GM10248 (cell line): ENCODE measurements at regions of chr14 and their contacts with region 1.

Region 1: DNA sequence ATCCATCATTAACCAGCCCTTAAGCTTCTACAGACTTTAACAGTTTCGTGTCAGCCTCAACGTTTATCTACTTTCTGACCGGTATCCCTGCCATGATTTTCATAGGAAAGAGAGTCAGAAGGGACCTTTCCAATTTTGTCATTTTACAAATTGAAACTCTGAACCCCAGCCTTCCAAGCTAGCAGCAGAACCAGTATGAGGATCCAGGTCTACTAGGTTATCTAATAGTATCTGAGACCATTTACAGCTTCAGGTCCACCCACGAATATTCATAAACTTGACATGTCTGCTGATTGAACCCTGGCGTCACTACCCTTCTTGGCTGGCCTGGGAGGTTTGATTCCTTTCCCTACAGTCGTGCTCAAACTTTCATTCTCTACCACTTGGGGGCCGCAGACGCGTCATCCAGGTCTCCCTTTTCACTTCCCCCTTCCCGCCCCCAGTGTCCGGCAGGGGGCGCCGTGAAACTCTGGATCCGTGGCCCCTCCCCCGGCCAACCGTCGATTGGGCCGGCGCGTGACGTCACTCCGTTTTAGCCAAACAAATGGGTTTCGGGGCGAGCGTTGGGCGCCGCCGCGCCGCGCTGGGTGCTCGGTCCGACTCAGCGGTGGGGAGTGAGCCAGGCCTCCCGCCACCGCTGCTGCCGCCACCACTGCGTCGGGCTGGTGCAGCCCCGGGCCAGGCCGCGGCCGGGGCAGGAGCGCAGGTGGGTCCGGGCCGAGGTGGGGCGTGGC is at the start of gene FBXO34:
- DNase-seq: peak; percentile 96
- CTCF ChIP-seq: peak; percentile 99

Region 2: DNA sequence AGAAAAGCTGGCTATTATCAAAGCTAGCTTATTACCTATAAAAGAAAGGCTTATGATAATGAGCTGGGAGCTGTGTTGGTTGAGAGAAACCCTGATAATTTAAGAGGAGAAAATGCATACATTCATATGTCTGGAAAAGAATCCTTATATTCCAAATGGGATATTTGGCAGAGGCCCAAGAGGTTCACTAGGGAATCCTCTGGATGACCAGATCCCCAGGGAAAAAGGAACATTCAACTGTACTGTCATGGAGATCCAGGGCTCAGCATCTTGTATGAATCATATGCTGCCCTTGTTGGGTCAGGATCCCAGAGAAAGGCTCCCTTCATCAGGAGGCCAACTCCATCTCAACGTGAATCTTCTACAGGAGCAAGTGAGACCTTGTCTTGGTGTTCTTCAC is 16.4 kb before region 1 on chr14:
- CTCF ChIA-PET with region 1: interaction called, 26 read pairs
- POLR2A ChIA-PET with region 1: no interaction called
- DNase-seq: no peak
- CTCF ChIP-seq: no peak

Region 3: DNA sequence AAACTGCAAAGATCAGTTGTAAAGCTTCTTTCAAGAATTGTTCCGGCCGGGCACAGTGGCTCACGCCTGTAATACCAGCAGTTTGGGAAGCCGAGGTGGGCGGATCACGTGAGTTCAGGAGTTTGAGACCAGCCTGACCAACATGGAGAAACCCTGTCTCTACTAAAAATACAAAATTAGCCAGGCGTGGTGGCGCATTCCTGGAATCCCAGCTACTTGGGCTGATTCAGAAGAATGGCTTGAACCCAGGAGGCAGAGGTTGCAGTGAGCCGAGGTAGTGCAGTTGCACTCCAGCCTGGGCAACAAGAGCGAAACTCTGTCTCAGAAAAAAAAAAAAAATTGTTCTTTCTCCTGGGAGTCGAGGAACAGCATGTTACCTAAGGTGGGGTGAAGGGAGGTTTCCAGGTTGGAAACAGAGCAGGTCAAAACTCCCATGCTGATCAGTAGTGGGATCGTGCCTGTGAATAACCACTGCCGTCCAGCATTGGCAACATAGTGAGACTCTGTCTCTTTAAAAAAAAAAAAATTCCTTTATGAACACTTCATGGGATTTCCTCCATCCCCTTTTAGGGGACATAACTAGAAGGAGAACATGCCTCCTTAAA is 14.2 kb after region 1 on chr14:
- CTCF ChIA-PET with region 1: interaction called, 10 read pairs
- POLR2A ChIA-PET with region 1: interaction called, 3 read pairs
- DNase-seq: no peak
- CTCF ChIP-seq: no peak

Region 4: GRCh38 chr14:55348766-55349453 is 77.9 kb after region 1 on chr14:
- CTCF ChIA-PET with region 1: interaction called, 56 read pairs
- POLR2A ChIA-PET with region 1: no interaction called
- DNase-seq: no peak
- CTCF ChIP-seq: no peak

Region 5: GRCh38 chr14:55361190-55361589 is 90.2 kb after region 1 on chr14:
- CTCF ChIA-PET with region 1: interaction called, 56 read pairs
- POLR2A ChIA-PET with region 1: interaction called, 16 read pairs
- DNase-seq: no peak
- CTCF ChIP-seq: no peak